Head of caudate nucleus (tissue), 42 donors: ENCODE measurements at regions of chr5 and their contacts with region 1.

Region 1: DNA sequence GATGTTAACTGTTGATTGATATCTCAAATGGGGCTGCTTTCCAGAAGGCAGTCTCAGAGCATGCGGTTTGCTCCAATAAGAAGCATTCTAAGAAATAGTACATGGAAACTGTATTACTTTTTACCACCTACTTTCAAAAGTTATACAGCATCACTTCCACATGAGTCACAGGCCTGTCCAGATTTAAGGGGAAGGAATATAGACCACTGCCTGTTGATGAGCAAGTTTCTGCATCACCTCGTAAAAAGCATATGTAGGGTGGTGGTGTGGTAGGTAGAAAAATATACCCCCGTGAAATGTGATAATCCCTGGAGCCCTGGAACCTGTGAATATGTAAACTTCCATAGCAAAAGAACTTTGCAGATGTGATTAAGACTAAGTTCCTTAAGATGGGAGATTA is 816.6 kb upstream of the CDH6 start:
- DNase-seq: no peak

Region 2: GRCh38 chr5:30469691-30470090 is 92.8 kb after region 1 on chr5:
- intact Hi-C with region 1: loop called (anchors 5 kb)
- DNase-seq: no peak

Region 3: GRCh38 chr5:30832519-30832918 is 455.7 kb after region 1 on chr5:
- intact Hi-C with region 1: no loop called
- DNase-seq: no peak

Region 4: DNA sequence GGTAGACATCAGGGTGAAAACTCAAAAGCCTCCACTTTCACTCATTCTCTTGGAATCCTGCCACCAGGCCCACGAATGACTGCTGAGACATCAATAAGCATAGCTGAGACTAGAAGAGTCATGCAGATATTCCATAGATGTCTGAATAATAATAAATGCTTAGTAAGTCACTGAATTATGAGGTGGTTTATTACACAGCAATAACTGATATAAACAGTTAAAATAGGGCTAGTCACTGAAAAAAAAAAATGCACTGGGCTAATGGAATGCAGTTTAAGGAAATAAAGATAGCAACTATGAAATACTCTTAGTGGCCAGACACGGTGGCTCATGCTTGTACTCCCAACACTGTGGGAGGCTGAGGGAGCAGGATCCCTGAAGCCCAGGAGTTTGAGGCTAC is 553.9 kb after region 1 on chr5:
- intact Hi-C with region 1: no loop called
- DNase-seq: no peak